ENCODE measurements at regions of chr2 and their contacts with region 1.

Region 1: GRCh38 chr2:230602562-230603230 is 109.9 kb upstream of the CAB39 start:
- DNase-seq: no peak
- ATAC-seq: no peak
- H3K4me3 ChIP-seq: no peak overlapping the region
- H3K27ac ChIP-seq: no peak overlapping the region
- H3K4me1 ChIP-seq: no peaks in the 10 kb centered on the region
- H3K27me3 ChIP-seq: no peaks in the 10 kb centered on the region
- CTCF ChIP-seq: no peak

Region 2: DNA sequence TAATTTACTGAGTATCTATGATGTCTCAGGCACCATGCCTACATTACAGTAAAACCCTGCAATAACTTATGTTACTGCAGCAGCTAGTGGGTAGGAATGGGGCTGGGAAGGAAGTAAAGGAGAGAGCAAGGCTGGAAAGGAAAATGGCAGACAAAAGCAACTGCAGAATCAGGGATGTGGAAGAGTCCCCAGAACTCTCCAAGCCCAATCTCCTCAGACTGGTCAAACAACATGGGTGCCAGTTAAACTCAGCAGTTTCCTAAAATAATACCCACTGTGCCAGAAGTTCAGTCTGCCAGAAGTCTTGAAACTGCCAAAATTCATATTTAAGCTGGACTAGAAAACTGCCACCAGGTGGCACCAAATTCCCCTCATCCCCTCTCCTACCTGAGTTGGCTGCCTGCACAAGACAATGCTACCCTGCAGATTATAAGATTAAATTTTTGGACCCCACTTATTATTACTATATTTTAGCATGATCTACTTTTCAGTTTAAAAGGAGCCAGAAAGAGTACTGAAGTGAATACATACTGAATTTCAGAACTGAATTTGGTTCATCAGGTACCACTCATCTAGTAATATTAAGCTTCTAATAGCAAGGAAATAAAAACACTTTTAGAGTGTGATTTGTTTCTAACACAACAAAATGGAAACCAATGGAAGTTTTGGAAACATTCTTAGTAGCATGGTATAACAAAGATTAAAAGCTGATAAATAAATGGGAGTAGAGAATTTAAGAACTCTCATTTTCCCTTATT is 801.5 kb before region 1 on chr2:
- intact Hi-C with region 1: loop called in 1 of 2 experiments (anchors 10 kb)
- DNase-seq: peak; percentile 34 to 59
- ATAC-seq: peak; percentile 51 to 86 (median 64)
- H3K4me3 ChIP-seq: no peak overlapping the region
- H3K27ac ChIP-seq: no peak overlapping the region
- H3K4me1 ChIP-seq: peaks cover 9% of the 10 kb centered on the region
- H3K27me3 ChIP-seq: no peaks in the 10 kb centered on the region
- CTCF ChIP-seq: peak; percentile 78

Measured in psoas muscle (tissue), 8 donors.